ENCODE measurements at regions of chr9 and their contacts with region 1.

Region 1: GRCh38 chr9:90325913-90326653 is 316.5 kb downstream of the DIRAS2 start:
- DNase-seq: no peak
- H3K4me3 ChIP-seq: no peak overlapping the region
- H3K27ac ChIP-seq: no peak overlapping the region
- H3K4me1 ChIP-seq: no peaks in the 10 kb centered on the region
- H3K27me3 ChIP-seq: no peaks in the 10 kb centered on the region
- CTCF ChIP-seq: no peak

Region 2: GRCh38 chr9:88927510-88927909 is 1398.6 kb before region 1 on chr9:
- CTCF ChIA-PET with region 1: no interaction called
- POLR2A ChIA-PET with region 1: interaction called, 13 read pairs
- intact Hi-C with region 1: no loop called
- DNase-seq: no peak
- H3K4me3 ChIP-seq: no peak overlapping the region
- H3K27ac ChIP-seq: no peak overlapping the region
- H3K4me1 ChIP-seq: no peaks in the 10 kb centered on the region
- H3K27me3 ChIP-seq: no peaks in the 10 kb centered on the region
- CTCF ChIP-seq: no peak

Region 3: GRCh38 chr9:90251316-90251715 is 74.8 kb before region 1 on chr9:
- CTCF ChIA-PET with region 1: no interaction called
- POLR2A ChIA-PET with region 1: interaction called, 17 read pairs
- intact Hi-C with region 1: no loop called
- DNase-seq: no peak
- H3K4me3 ChIP-seq: no peak overlapping the region
- H3K27ac ChIP-seq: no peak overlapping the region
- H3K4me1 ChIP-seq: no peaks in the 10 kb centered on the region
- H3K27me3 ChIP-seq: no peaks in the 10 kb centered on the region
- CTCF ChIP-seq: no peak

Measured in A673 (cell line).